ENCODE measurements at regions of chr5 and their contacts with region 1.

Region 1: DNA sequence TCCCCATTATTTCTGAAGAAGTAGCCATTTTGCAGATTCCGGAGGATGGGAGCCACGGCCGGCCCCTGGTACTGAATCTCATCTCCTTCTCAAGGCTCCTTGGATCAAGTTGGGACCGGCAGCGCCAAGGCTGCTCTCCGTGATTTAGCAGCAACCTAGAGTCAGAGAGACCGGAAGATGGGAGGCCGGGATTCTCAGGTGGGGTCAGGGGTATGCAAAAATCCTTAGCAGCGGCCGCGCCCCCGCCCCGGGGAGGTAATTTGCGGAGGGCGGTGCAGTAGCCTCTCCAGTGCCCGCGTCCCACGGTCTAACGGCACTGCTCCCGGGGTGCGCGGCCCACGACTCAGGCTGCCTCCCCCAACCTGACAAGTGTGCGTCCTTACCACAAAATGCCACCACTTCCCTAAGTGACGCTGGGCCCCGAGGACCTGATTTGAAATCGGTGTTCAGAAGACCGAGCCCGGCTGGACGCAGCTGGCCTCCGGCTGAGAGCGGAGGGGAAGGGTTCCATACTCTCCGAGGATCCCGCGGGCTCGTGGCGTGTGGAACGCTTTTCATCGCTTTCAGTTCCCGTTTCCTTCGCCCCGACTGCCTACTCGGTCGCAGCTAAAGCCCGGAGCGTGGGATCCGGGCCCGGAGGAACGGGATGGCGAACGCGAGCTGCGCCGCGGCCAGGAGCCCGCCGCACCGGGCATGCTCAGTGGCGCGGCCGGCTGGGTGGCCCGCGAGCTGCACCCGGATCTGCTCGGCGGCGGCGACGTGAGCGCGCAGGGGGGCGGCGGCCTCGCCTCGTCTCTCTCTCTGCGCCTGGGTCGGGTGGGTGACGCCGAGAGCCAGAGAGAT is at the start of gene SCAMP1:
- DNase-seq: peak; percentile 94 to 98 (median 96)
- ATAC-seq: peak; percentile 98
- H3K4me3 ChIP-seq: peak within 1 kb of the TSS; percentile 94
- H3K4me1 ChIP-seq: peaks cover 10% of the 10 kb centered on the region
- CTCF ChIP-seq: peak; percentile 54
- total RNA-seq, gene SCAMP1: 23.5 to 41.7 (median 36.1) TPM

Region 2: GRCh38 chr5:78294248-78295034 is 65.6 kb before region 1 on chr5 and contains the start of gene AP3B1:
- intact Hi-C with region 1: loop called (anchors 2 to 10 kb)
- DNase-seq: peak; percentile 99 to 100 (median 99)
- ATAC-seq: peak; percentile 98
- H3K4me3 ChIP-seq: peak within 1 kb of the TSS; percentile 67
- H3K4me1 ChIP-seq: peaks cover 15% of the 10 kb centered on the region
- CTCF ChIP-seq: no peak
- total RNA-seq, gene AP3B1: 38.5 to 55.6 (median 52.1) TPM